T-cell (primary cell): ENCODE measurements at regions of chr13 and their contacts with region 1.

Region 1: GRCh38 chr13:79405829-79406596 is at the start of gene RBM26:
- DNase-seq: peak; percentile 84 to 98 (median 91)
- ATAC-seq: peak; percentile 89 to 91 (median 90)
- H3K4me3 ChIP-seq: peak within 1 kb of the TSS; percentile 65 to 98
- H3K4me3 Mint-ChIP-seq: peak within 1 kb of the TSS in 1 of 3 donors; percentile 94
- H3K27ac ChIP-seq: peak within 1 kb of the TSS; percentile 90
- H3K27ac Mint-ChIP-seq: peak within 1 kb of the TSS; percentile 95 to 99
- H3K4me1 ChIP-seq: peaks cover 18 to 45% of the 10 kb centered on the region in 2 experiments
- H3K4me1 Mint-ChIP-seq: peaks cover 17 to 33% (median 24%) of the 10 kb centered on the region in 3 donors
- H3K27me3 ChIP-seq: no peaks in the 10 kb centered on the region
- H3K27me3 Mint-ChIP-seq: no peaks in the 10 kb centered on the region
- total RNA-seq, gene RBM26: 76.7 to 97.8 (median 77.9) TPM

Region 2: GRCh38 chr13:79541426-79542049 is 135.5 kb after region 1 on chr13:
- CTCF ChIA-PET with region 1: interaction called, 3 to 10 read pairs
- POLR2A ChIA-PET with region 1: interaction called in 1 of 2 experiments, 5 read pairs
- DNase-seq: peak in 2 of 35 experiments; percentile 36 to 83
- ATAC-seq: peak in 2 of 4 experiments; percentile 55 to 57
- H3K4me3 ChIP-seq: no peak overlapping the region
- H3K4me3 Mint-ChIP-seq: no peak overlapping the region
- H3K27ac ChIP-seq: no peak overlapping the region
- H3K27ac Mint-ChIP-seq: no peak overlapping the region
- H3K4me1 ChIP-seq: no peaks in the 10 kb centered on the region
- H3K4me1 Mint-ChIP-seq: no peaks in the 10 kb centered on the region
- H3K27me3 ChIP-seq: no peaks in the 10 kb centered on the region
- H3K27me3 Mint-ChIP-seq: no peaks in the 10 kb centered on the region

Region 3: DNA sequence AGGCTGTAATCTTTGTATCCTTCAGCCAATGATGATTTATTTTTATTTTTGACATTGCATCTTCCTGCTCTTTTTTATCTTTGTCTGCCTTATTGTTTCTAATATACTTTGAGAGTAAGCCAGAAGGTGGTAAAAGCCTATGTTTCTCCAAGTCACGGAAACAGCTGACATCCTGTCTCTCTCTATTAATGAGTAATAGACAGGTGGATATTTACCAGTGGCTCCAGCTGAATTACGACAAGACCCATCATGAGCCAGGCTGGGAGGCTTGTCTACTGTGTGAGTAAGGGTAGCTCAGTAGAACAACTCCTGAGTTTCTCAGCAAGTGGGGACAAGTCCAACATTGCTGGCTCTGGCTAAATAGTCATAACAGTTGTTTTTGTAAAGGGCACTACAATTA is 241.5 kb after region 1 on chr13:
- CTCF ChIA-PET with region 1: no interaction called
- POLR2A ChIA-PET with region 1: no interaction called
- DNase-seq: no peak
- ATAC-seq: no peak
- H3K4me3 ChIP-seq: no peak overlapping the region
- H3K4me3 Mint-ChIP-seq: no peak overlapping the region
- H3K27ac ChIP-seq: no peak overlapping the region
- H3K27ac Mint-ChIP-seq: no peak overlapping the region
- H3K4me1 ChIP-seq: no peaks in the 10 kb centered on the region
- H3K4me1 Mint-ChIP-seq: no peaks in the 10 kb centered on the region
- H3K27me3 ChIP-seq: no peaks in the 10 kb centered on the region
- H3K27me3 Mint-ChIP-seq: peaks cover 8 to 12% of the 10 kb centered on the region in 2 donors